Breast epithelium (tissue), 4 donors: ENCODE measurements at regions of chrX and their contacts with region 1.

Region 1: DNA sequence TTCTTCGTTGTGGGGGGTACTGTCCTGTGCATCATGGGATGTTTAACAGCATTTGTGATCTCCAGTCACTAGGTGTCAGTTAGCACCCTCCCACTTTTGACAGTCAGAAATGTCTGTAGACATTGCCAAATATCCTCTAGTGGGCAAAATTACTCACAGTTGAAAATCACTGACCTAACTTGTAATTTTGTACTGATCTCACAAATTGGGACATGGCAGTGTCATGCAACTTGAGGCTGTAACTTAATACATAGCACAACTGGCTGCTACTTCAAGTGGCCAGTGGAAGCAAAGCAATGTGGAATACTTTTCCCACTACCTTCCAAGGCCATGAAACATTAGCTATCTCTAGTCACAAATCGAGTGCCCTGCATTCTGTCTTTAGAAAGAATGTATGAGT is 23.2 kb upstream of the TSPAN7 start:
- DNase-seq: no peak
- H3K4me3 ChIP-seq: no peak overlapping the region
- H3K27ac ChIP-seq: no peak overlapping the region
- H3K4me1 ChIP-seq: no peaks in the 10 kb centered on the region
- H3K27me3 ChIP-seq: peaks cover 0 to 27% of the 10 kb centered on the region in 2 donors
- CTCF ChIP-seq: no peak
- POLR2A ChIP-seq: no peak

Region 2: DNA sequence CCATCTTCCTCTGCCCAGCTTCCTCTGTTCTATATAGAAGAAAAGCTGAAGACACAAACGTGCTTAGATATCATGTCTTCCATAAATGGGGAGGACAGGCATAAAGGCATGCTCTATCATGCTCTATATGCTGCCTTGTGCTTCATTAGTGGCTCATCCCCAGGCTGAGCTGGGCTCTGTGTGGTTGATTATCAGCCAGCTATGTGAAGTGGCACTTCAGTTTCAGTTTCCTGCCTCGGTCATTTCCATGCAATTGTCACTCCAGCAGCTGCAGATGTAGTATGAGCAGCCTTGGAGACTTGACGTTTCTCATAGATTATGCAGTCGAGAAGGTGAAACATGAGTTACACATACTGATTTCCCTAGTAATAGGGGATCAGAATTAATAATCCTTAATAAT is 425.6 kb before region 1 on chrX:
- intact Hi-C with region 1: no loop called
- DNase-seq: no peak
- H3K4me3 ChIP-seq: no peak overlapping the region
- H3K27ac ChIP-seq: no peak overlapping the region
- H3K4me1 ChIP-seq: no peaks in the 10 kb centered on the region
- H3K27me3 ChIP-seq: peaks cover 0 to 34% of the 10 kb centered on the region in 2 donors
- CTCF ChIP-seq: no peak
- POLR2A ChIP-seq: no peak

Region 3: DNA sequence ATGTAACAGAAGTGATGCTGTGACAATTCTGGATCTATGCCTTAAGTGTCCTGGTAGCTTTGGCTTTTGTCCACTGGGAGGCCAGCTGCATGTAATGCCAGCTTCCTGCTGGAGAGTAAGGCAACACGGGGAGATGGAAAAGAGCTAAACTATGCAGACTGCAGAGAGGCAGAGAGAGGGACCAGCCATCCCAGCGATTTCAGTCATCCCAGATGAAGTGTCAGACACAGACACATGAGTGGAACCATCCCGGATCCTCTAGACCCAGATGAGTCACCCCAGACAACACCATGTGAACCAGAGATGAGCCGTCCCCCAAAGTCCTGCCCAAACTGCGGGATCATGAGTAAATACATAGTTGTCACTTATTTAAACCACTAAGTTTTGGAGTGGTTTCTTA is 332.1 kb before region 1 on chrX:
- intact Hi-C with region 1: loop called (anchors 5 kb)
- DNase-seq: no peak
- H3K4me3 ChIP-seq: no peak overlapping the region
- H3K27ac ChIP-seq: no peak overlapping the region
- H3K4me1 ChIP-seq: no peaks in the 10 kb centered on the region
- H3K27me3 ChIP-seq: peaks cover 0 to 4% of the 10 kb centered on the region in 2 donors
- CTCF ChIP-seq: no peak
- POLR2A ChIP-seq: no peak

Region 4: GRCh38 chrX:39149761-39150160 is 611.6 kb after region 1 on chrX:
- intact Hi-C with region 1: no loop called
- DNase-seq: peak; percentile 34 to 53
- H3K4me3 ChIP-seq: no peak overlapping the region
- H3K27ac ChIP-seq: no peak overlapping the region
- H3K4me1 ChIP-seq: no peaks in the 10 kb centered on the region
- H3K27me3 ChIP-seq: peaks cover 0 to 54% of the 10 kb centered on the region in 2 donors
- CTCF ChIP-seq: peak; percentile 20 to 52 (median 45)
- POLR2A ChIP-seq: no peak

Region 5: GRCh38 chrX:39953883-39954282 is 1415.7 kb after region 1 on chrX:
- intact Hi-C with region 1: loop called (anchors 5 kb)
- DNase-seq: peak; percentile 77 to 79
- H3K4me3 ChIP-seq: no peak overlapping the region
- H3K27ac ChIP-seq: no peak overlapping the region
- H3K4me1 ChIP-seq: no peaks in the 10 kb centered on the region
- H3K27me3 ChIP-seq: peaks cover 0 to 78% of the 10 kb centered on the region in 2 donors
- CTCF ChIP-seq: no peak
- POLR2A ChIP-seq: no peak